ENCODE measurements at regions of chr16 and their contacts with region 1.

Region 1: DNA sequence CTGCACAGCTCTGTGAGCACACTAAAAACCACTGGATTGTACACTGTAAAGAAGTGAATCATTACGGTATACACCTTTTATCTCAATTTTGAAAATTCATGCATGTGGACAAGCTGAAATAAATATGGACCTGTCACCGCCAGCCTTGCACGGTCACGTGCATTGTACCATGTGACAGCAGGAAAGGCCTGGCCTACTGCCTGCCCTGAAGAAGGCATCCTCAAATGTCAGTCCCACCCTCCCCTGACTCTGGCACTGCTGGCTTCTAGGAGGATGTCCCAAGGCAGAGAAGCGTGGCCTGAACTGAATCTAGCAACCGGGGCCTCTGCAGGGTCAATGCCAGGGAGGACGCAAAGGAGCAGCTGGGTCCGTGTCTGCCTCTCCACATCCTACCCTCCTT is 34.6 kb downstream of the SLC38A8 start:
- DNase-seq: no peak
- H3K4me3 ChIP-seq: no peak overlapping the region
- H3K27ac ChIP-seq: no peak overlapping the region
- H3K4me1 ChIP-seq: no peaks in the 10 kb centered on the region
- H3K27me3 ChIP-seq: peaks cover 0 to 5% of the 10 kb centered on the region in 2 donors
- CTCF ChIP-seq: no peak
- POLR2A ChIP-seq: no peak

Region 2: GRCh38 chr16:82560805-82561325 is 1447.1 kb before region 1 on chr16:
- intact Hi-C with region 1: loop called (anchors 10 kb)
- DNase-seq: no peak
- H3K4me3 ChIP-seq: no peak overlapping the region
- H3K27ac ChIP-seq: no peak overlapping the region
- H3K4me1 ChIP-seq: no peaks in the 10 kb centered on the region
- H3K27me3 ChIP-seq: no peaks in the 10 kb centered on the region
- CTCF ChIP-seq: no peak
- POLR2A ChIP-seq: no peak

Region 3: DNA sequence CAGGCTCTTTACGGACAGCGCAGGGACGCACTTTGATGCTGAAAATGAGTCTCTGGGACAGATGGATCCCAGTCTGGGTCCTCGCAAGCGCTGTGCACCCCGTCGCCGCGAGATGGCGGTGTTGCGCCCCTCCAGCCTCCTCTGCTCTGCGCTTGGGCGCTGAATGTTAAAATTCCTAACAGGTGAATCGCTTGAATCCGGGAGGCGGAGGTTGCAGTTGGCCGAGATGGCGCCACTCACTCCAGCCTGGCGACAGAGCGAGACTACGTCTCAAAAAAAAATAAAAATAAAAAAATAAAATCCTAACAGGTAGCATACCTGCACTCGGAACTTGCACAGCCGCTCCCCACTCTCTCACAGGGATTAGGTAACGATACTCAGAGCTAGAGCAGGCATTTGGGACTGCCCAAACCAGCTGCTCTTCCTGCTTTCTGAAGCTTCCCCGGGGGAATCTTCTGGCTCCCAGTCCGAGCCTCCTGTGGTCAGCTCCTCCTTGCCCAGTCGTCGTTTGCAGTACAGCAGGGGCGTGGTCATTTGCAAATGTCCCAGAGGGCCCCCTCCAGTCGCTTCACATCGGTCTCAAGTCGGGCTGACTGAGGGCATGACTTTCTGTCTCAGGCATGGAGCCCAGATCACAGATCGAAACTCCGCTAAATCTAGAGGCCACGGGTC is 81.1 kb before region 1 on chr16:
- intact Hi-C with region 1: no loop called
- DNase-seq: peak; percentile 67 to 90
- H3K4me3 ChIP-seq: peak overlapping the region in 2 of 3 donors; percentile 46 to 47
- H3K27ac ChIP-seq: peak overlapping the region; percentile 56 to 85
- H3K4me1 ChIP-seq: no peaks in the 10 kb centered on the region
- H3K27me3 ChIP-seq: no peaks in the 10 kb centered on the region
- CTCF ChIP-seq: peak; percentile 71 to 92 (median 83)
- POLR2A ChIP-seq: no peak

Region 4: GRCh38 chr16:83994087-83994486 is 13.9 kb before region 1 on chr16:
- intact Hi-C with region 1: loop called (anchors 1 kb)
- DNase-seq: no peak
- H3K4me3 ChIP-seq: no peak overlapping the region
- H3K27ac ChIP-seq: no peak overlapping the region
- H3K4me1 ChIP-seq: peaks cover 0 to 5% of the 10 kb centered on the region in 2 donors
- H3K27me3 ChIP-seq: peaks cover 0 to 4% of the 10 kb centered on the region in 2 donors
- CTCF ChIP-seq: no peak
- POLR2A ChIP-seq: no peak